Uterus (tissue), 4 donors: ENCODE measurements at regions of chr9 and their contacts with region 1.

Region 1: DNA sequence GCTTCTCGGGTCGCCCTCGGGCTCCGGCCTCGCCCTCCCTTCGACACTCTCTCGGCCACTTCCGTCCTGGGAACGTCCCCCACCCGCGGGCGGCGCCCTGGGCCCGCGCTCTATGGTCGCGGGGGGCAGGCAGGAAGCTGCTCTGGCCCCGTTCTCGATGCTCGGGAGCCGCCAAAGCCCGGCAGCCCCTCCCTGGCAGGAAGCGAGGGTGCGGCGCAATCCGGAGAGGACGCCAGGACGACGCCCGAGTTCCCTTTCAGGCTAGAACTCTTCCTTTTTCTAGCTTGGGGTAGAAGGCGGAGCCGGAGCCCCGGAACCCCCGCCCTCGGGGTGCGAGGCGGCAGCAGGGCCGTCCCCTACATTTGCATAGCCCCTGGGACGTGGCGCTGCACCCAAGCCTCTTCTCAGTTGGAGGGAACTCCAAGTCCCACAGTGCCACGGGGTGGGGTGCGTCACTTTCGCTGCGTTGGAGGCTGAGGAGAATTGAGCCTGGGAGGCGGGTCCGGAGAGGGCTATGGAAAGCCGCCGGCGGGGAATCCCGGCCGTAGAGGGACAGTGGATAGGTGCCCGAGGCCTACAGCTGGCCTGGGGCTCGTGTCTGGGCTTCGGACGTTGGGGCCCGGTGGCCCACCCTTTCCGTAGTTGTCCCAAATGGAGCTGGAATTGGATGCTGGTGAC is at the starts of genes CREB3 and TLN1:
- DNase-seq: peak; percentile 98 to 99
- H3K4me3 ChIP-seq: peak within 1 kb of the TSS; percentile 62 to 84
- H3K27ac ChIP-seq: peak within 1 kb of the TSS; percentile 94 to 97
- H3K4me1 ChIP-seq: peaks cover 0 to 8% of the 10 kb centered on the region in 2 donors
- H3K27me3 ChIP-seq: no peaks in the 10 kb centered on the region
- CTCF ChIP-seq: peak in 3 of 4 experiments; percentile 3 to 17 (median 9)
- POLR2A ChIP-seq: peak; percentile 80 to 93
- total RNA-seq, gene CREB3: 30.5 to 105 (median 47.2) TPM
- total RNA-seq, gene TLN1: 202 to 540 (median 281) TPM

Region 2: DNA sequence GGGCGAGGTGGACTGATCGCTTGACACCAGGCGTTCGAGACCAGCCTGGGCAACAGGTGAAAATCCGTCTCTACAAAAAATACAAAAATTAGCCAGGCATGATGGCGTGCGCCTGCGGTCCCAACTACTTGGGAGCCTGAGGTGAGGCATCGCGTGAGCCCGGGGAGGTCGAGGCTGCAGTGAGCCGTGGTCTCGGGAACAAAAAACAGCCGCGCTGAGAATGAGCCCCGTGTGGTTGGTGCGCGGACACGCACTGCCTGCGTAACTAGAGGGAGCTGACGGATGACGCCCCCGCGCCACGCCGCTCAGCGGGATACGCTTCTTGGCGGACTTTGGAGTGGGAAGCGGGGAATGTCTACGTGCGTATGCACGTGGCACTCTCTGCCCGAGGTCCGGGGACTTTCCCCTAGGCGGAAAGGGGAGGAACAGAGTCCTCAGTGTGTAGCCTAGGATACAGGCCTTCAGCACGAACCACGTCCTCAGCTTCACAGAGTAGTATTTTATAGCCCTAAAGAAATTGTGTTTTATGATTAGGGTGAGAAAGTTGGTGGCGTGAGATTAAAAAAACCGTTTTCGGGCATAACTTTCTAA is 74.6 kb before region 1 on chr9 and contains the start of gene RMRP:
- intact Hi-C with region 1: loop called (anchors 5 kb)
- DNase-seq: peak; percentile 97 to 98
- H3K4me3 ChIP-seq: peak within 1 kb of the TSS; percentile 82 to 100
- H3K27ac ChIP-seq: peak within 1 kb of the TSS; percentile 96 to 99
- H3K4me1 ChIP-seq: peaks cover 0 to 6% of the 10 kb centered on the region in 2 donors
- H3K27me3 ChIP-seq: no peaks in the 10 kb centered on the region
- CTCF ChIP-seq: peak; percentile 33 to 73 (median 46)
- POLR2A ChIP-seq: peak; percentile 85 to 86
- total RNA-seq, gene RMRP: 2,632 to 57,722 (median 9,015) TPM

Region 3: GRCh38 chr9:35689601-35690430 is 42.4 kb before region 1 on chr9 and contains the start of gene TPM2:
- intact Hi-C with region 1: loop called (anchors 5 kb)
- DNase-seq: peak; percentile 91 to 93
- H3K4me3 ChIP-seq: peak within 1 kb of the TSS; percentile 57 to 71
- H3K27ac ChIP-seq: peak within 1 kb of the TSS; percentile 93 to 98
- H3K4me1 ChIP-seq: peaks cover 0 to 4% of the 10 kb centered on the region in 2 donors
- H3K27me3 ChIP-seq: no peaks in the 10 kb centered on the region
- CTCF ChIP-seq: peak in 1 of 4 experiments; percentile 12
- POLR2A ChIP-seq: peak; percentile 68 to 94
- total RNA-seq, gene TPM2: 491 to 2,682 (median 829) TPM

Region 4: GRCh38 chr9:35790385-35791296 is 58.4 kb after region 1 on chr9:
- intact Hi-C with region 1: no loop called
- DNase-seq: peak; percentile 77 to 86
- H3K4me3 ChIP-seq: peak overlapping the region; percentile 47 to 63
- H3K27ac ChIP-seq: peak overlapping the region; percentile 81 to 91
- H3K4me1 ChIP-seq: peaks cover 12 to 22% of the 10 kb centered on the region in 2 donors
- H3K27me3 ChIP-seq: no peaks in the 10 kb centered on the region
- CTCF ChIP-seq: peak; percentile 85 to 93 (median 88)
- POLR2A ChIP-seq: no peak